ENCODE measurements at regions of chr2 and their contacts with region 1.

Region 1: DNA sequence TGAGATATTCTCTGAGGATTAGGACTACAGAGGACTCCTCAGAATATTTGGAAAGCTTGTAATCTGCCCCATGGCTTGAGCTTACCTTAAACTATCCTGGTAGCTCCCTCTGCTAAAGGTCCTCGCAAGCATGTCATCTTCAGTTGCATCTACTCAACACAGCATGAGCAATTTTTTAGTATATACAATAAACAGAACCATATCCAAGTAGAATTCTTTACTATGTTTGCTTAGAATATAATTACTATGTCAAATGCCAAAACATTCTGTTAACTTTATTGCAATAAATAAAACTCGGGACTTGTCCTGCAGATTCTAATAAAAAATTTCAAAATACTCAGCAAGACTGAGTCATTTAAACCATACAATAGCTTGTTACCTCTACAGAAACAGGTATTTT is 62.8 kb downstream of the ABCB11 start:
- DNase-seq: no peak
- H3K4me3 ChIP-seq: no peak overlapping the region
- H3K4me3 Mint-ChIP-seq: no peak overlapping the region
- H3K27ac ChIP-seq: no peak overlapping the region
- H3K27ac Mint-ChIP-seq: no peak overlapping the region
- H3K4me1 ChIP-seq: peaks cover 14 to 18% of the 10 kb centered on the region in 2 donors
- H3K4me1 Mint-ChIP-seq: peaks cover 33% of the 10 kb centered on the region
- H3K27me3 ChIP-seq: no peaks in the 10 kb centered on the region
- H3K27me3 Mint-ChIP-seq: no peaks in the 10 kb centered on the region
- CTCF ChIP-seq: no peak

Region 2: DNA sequence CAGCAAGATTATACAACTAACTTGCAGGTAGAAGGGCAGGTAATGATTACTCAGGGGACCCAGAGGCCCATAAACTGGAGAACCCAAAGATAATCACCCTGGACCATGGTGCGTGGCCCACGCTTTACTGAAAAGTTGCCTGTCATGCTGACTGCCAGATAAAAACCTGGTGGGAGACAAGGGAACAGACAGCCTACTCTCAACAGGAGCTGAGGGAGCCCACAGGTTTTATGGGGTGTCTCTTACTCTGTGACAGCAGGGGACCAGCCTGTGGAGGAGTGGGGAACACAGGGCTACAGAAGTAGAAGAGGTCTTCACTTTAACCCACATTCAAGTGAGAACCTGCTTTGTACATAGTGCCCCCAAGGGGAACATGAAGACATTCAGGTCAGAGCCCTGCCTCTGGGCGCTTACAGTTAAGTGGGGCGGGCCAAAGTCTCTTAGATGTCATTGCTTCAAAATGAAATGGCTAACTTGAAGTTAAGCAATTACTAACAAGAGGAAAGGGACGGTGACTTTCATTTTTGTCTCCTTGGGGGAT is 161.4 kb after region 1 on chr2:
- intact Hi-C with region 1: loop called in 1 of 2 experiments (anchors 5 kb)
- DNase-seq: no peak
- H3K4me3 ChIP-seq: no peak overlapping the region
- H3K4me3 Mint-ChIP-seq: no peak overlapping the region
- H3K27ac ChIP-seq: no peak overlapping the region
- H3K27ac Mint-ChIP-seq: no peak overlapping the region
- H3K4me1 ChIP-seq: no peaks in the 10 kb centered on the region
- H3K4me1 Mint-ChIP-seq: peaks cover 14% of the 10 kb centered on the region
- H3K27me3 ChIP-seq: no peaks in the 10 kb centered on the region
- H3K27me3 Mint-ChIP-seq: peaks cover 0 to 2% (median 0%) of the 10 kb centered on the region in 3 donors
- CTCF ChIP-seq: no peak